ENCODE measurements at regions of chr5 and their contacts with region 1.

Region 1: DNA sequence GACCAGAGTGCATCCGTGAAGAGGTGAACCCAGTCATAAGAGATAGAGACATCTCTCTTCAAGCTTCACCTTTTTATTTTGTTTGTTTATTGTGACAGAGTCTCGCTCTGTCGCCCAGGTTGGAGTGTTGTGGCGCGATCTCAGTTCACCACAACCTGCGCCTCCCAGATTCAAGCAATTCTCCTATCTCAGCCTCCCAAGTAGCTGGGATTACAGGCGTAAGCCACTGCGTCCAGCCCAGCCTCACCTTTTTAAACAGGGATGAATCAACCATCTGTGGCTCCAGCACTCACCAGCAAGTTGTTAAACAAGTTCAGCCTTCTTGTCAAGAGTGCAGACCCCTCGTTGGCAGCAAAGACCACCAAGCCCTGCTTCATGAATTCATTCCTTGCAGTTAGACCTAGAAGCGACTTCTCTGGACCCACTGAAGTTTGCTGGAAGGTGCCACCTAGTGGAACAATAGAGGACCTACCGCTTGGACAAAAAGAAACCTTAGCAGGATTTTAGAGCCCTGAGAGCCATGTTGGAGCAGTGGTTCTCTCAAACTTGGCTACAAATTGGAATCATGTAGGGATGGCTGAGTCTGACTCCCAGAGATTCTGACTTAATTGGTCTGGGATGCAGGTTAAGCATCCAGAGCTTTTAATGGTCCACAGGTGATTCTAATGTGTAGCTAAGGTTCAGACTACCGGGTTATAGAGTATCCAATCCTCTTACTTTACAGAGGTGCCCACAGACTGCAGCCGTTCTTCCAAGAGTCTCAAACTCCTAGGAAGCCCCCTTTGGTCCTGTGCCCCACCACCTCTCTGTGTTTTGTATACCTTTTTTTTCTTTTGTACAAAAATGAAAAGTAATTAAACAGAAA is 10.5 kb upstream of the GALNT10 start:
- DNase-seq: peak; percentile 33
- H3K4me3 ChIP-seq: no peak overlapping the region
- H3K27ac ChIP-seq: no peak overlapping the region
- H3K4me1 ChIP-seq: no peaks in the 10 kb centered on the region
- H3K27me3 ChIP-seq: no peaks in the 10 kb centered on the region
- CTCF ChIP-seq: peak; percentile 83

Region 2: DNA sequence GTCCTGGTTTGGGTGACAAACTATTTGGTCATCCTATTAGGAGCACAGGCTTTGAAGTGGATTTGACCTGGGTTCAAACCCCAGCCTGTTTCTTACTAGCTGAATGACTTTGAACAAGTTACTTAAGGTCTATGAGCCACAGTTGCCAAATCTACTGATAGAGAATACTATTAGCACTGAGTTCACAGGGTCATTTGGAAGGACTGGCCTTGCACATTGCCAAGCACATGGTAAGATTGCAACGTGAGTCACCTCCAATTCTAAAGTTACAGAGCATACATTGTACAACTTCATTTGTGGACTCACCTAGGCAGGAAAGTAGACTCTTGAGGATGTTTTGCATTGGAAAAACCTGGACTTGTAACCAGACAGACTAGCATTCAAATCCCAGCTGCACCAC is 102.4 kb before region 1 on chr5:
- intact Hi-C with region 1: loop called (anchors 5 kb)
- DNase-seq: no peak
- H3K4me3 ChIP-seq: no peak overlapping the region
- H3K27ac ChIP-seq: no peak overlapping the region
- H3K4me1 ChIP-seq: no peaks in the 10 kb centered on the region
- H3K27me3 ChIP-seq: no peaks in the 10 kb centered on the region
- CTCF ChIP-seq: no peak

Region 3: DNA sequence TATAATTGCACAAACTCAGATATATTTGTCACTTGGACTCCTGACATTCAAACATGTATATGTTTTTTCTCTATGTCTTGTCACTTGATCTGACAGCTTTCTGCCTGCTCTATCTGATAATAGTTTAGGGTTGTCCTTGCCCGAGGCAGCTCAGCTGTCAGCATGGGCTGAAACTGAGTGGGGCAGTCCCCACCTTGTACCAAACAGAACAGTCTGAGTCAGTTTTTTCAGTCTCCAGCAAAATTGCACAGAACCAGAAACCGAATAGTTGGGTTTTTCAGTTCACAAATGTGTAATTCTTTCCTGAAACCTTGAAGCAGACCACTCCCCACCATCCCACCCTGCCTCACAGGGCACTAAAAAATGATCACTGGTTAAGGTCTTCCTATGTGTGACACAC is 307.5 kb after region 1 on chr5:
- intact Hi-C with region 1: no loop called
- DNase-seq: no peak
- H3K4me3 ChIP-seq: no peak overlapping the region
- H3K27ac ChIP-seq: no peak overlapping the region
- H3K4me1 ChIP-seq: no peaks in the 10 kb centered on the region
- H3K27me3 ChIP-seq: peaks cover 48% of the 10 kb centered on the region
- CTCF ChIP-seq: no peak